ENCODE measurements at regions of chr12 and their contacts with region 1.

Region 1: GRCh38 chr12:49069507-49070346 is at the start of gene RHEBL1:
- DNase-seq: peak; percentile 99
- H3K4me3 Mint-ChIP-seq: peak within 1 kb of the TSS; percentile 89
- H3K27ac Mint-ChIP-seq: peak within 1 kb of the TSS; percentile 90
- H3K4me1 Mint-ChIP-seq: peaks cover 24% of the 10 kb centered on the region
- H3K27me3 Mint-ChIP-seq: no peaks in the 10 kb centered on the region

Region 2: GRCh38 chr12:48651681-48652080 is 418.0 kb before region 1 on chr12:
- CTCF ChIA-PET with region 1: no interaction called
- DNase-seq: no peak
- H3K4me3 Mint-ChIP-seq: no peak overlapping the region
- H3K27ac Mint-ChIP-seq: no peak overlapping the region
- H3K4me1 Mint-ChIP-seq: no peaks in the 10 kb centered on the region
- H3K27me3 Mint-ChIP-seq: no peaks in the 10 kb centered on the region

Region 3: GRCh38 chr12:48917857-48918537 is 151.7 kb before region 1 on chr12:
- CTCF ChIA-PET with region 1: no interaction called
- DNase-seq: peak; percentile 67
- H3K4me3 Mint-ChIP-seq: peak overlapping the region; percentile 74
- H3K27ac Mint-ChIP-seq: peak overlapping the region; percentile 87
- H3K4me1 Mint-ChIP-seq: peaks cover 29% of the 10 kb centered on the region
- H3K27me3 Mint-ChIP-seq: no peaks in the 10 kb centered on the region

Region 4: DNA sequence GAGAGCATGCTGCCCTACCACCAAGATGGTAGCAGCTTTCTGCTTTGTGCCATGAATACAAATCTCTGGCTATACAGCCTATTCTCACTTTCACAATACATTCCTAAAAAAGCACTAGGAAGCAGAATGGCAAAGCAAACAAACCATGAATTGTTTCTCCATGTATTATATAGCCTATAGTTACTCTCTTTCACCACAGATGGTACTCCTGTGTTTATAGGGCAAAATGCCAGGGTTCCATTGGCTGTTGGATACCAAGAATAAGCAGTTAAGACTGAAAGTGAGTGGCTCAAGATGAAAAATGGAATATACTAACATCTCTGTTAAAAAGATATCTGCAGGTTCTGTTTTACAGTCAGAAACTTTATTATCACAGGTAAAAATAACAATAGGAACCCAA is 123.5 kb before region 1 on chr12:
- CTCF ChIA-PET with region 1: no interaction called
- DNase-seq: no peak
- H3K4me3 Mint-ChIP-seq: no peak overlapping the region
- H3K27ac Mint-ChIP-seq: no peak overlapping the region
- H3K4me1 Mint-ChIP-seq: peaks cover 26% of the 10 kb centered on the region
- H3K27me3 Mint-ChIP-seq: no peaks in the 10 kb centered on the region

Region 5: DNA sequence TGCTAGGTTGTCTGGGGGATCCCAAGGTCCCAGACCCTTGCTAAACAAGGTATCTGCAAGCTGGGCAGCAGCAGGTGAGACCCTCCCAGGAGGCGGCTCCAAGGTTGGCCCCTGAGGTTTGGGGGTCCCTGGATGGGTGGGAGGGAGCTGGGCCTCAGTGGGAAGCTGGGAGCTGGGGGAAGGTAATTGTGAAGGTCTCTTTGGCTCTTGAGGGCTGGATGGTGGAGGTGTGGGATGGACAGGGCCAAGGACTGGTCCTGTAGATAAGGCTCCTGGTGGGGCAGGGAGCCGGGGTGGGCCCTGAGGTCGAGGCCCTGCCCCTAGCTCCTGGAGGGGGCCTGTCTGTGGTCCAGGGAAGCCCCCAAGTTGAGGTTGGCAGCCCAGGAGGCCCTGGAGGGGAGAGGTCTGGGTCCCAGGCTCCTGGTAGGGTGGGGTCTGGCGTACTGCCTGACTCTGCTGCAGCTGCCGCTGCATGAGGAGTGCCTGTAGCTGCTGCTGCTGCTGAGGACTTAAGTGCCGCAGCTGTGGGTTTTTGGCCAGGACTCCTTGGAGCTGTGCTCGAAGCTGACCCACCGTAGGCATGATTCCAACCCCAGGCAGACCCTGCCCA is 38.1 kb before region 1 on chr12:
- CTCF ChIA-PET with region 1: no interaction called
- DNase-seq: no peak
- H3K4me3 Mint-ChIP-seq: no peak overlapping the region
- H3K27ac Mint-ChIP-seq: no peak overlapping the region
- H3K4me1 Mint-ChIP-seq: peaks cover 4% of the 10 kb centered on the region
- H3K27me3 Mint-ChIP-seq: no peaks in the 10 kb centered on the region

Region 6: DNA sequence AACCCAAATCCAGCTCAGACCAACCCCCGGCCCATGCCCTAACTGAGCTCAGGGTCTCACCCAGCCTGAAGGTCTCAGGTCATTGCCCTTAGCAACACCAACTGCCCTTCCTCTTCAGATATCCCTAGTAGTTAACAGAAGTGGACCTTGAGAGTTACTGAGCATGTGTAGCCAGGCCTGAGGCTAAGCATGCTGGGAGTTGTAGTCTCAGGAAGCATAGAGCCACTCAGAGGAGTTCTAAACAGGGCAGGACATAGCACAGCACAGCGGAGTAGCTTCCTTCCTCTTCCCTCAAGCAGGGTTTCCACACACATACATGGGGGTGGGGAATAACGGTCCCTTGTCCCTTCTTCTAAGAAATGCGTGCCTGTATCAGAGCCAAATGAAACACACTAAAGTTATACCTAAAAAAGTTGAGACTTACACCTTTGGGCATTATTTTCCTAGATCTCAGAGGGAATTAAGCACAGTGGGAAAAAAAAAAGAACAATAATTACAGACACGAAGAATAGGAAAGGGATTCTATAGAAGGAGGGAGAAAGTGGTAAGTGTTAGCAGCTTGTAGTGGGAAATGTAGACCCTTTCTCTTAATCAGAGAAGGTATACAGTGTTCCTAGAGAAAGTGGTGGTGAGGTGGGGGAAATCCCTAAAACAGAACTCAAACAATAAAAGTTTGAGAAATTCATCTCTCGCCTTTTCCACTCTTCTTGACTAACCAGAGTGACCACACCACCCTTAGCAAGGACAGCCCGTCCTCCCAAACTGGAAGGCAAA is 13.6 kb before region 1 on chr12:
- CTCF ChIA-PET with region 1: interaction called, 10 read pairs
- DNase-seq: peak; percentile 72
- H3K4me3 Mint-ChIP-seq: peak overlapping the region; percentile 92
- H3K27ac Mint-ChIP-seq: peak overlapping the region; percentile 56
- H3K4me1 Mint-ChIP-seq: peaks cover 48% of the 10 kb centered on the region
- H3K27me3 Mint-ChIP-seq: peaks cover 5% of the 10 kb centered on the region

Region 7: DNA sequence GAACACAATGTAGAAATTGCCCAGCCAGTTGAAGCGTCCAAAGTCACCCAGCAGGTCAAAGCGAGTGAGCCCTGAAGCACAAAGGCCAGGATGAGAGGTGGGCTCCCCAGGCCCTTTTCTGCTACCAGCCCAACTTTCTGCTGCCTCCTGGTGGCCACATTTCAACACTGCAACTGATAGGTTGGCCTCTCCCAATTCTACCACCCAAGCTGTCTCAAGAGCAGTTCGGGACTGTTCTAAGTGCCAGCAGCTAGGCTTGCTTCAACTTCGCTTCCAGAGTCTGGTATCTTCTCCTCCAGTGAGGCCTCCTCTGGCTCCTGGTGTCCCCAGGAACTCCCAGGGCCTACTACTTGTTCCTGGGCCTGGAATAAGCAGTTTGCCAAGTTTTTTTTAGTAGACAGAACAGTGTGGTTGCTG is 28.3 kb after region 1 on chr12:
- CTCF ChIA-PET with region 1: interaction called, 174 read pairs
- DNase-seq: peak; percentile 74
- H3K4me3 Mint-ChIP-seq: no peak overlapping the region
- H3K27ac Mint-ChIP-seq: no peak overlapping the region
- H3K4me1 Mint-ChIP-seq: peaks cover 18% of the 10 kb centered on the region
- H3K27me3 Mint-ChIP-seq: peaks cover 32% of the 10 kb centered on the region

Region 8: GRCh38 chr12:49232940-49233841 is 163.5 kb after region 1 on chr12:
- CTCF ChIA-PET with region 1: interaction called, 17 read pairs
- DNase-seq: no peak
- H3K4me3 Mint-ChIP-seq: peak overlapping the region; percentile 53
- H3K27ac Mint-ChIP-seq: peak overlapping the region; percentile 92
- H3K4me1 Mint-ChIP-seq: peaks cover 21% of the 10 kb centered on the region
- H3K27me3 Mint-ChIP-seq: peaks cover 29% of the 10 kb centered on the region

Measured in activated naive CD4-positive, alpha-beta T cell treated with anti-CD3 and anti-CD28 coated beads, Interleukin-2, amount 10 ng/mL, durations not matched to agents 7 days and 5 days (primary cell).